ENCODE measurements at regions of chr14 and their contacts with region 1.

Region 1: GRCh38 chr14:64823305-64823861 is 56.3 kb downstream of the SPTB start:
- DNase-seq: peak; percentile 90
- CTCF ChIP-seq: peak; percentile 85

Region 2: DNA sequence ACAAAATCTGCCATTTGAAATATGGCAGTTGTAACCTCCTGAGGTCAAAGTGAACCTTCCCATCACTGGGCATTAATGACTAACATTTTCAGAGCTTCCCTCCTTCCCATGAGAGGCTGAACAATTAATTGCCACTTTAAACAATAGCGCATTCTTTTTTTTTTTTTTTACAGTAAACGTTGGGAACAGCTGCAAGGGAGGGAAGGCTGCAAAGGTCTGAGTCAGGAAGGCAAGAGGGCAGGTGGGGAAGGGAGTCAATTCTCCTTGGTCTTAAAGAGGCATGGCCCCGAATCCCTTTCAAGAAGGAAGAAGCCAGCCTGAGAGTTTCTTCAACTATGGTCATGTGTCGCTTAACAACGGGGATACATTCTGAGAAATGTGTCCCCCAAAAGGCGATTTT is 160.2 kb before region 1 on chr14:
- CTCF ChIA-PET with region 1: no interaction called
- POLR2A ChIA-PET with region 1: no interaction called
- DNase-seq: no peak
- CTCF ChIP-seq: no peak

Region 3: GRCh38 chr14:64788668-64789067 is 34.7 kb before region 1 on chr14:
- CTCF ChIA-PET with region 1: no interaction called
- POLR2A ChIA-PET with region 1: no interaction called
- DNase-seq: no peak
- CTCF ChIP-seq: no peak

Region 4: DNA sequence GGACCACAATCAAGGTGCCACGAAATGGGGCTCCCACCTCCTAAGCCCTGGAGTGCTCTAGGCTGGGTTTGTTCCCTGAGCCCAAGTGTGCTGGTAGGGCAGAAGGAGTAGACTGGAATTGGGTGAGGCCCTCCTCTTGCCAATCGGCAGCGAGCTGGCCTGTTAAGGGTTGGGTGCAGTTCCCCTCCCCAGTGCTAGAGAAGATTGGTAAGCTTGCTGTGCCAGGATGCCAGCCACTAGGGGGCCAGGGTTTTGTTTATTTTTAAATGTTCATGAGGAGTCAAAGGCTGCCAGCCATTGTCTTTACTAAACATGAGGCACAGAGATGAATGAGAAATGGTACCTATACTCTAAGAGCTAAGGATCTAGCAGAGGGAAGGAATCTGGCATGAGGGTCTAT is 23.4 kb before region 1 on chr14:
- CTCF ChIA-PET with region 1: interaction called, 10 read pairs
- POLR2A ChIA-PET with region 1: no interaction called
- DNase-seq: no peak
- CTCF ChIP-seq: no peak

Region 5: GRCh38 chr14:64812217-64812811 is 11.1 kb before region 1 on chr14:
- CTCF ChIA-PET with region 1: interaction called, 30 read pairs
- POLR2A ChIA-PET with region 1: no interaction called
- DNase-seq: peak; percentile 49
- CTCF ChIP-seq: no peak

Region 6: GRCh38 chr14:64848239-64848638 is 24.9 kb after region 1 on chr14:
- CTCF ChIA-PET with region 1: interaction called, 13 read pairs
- POLR2A ChIA-PET with region 1: no interaction called
- DNase-seq: peak; percentile 31
- CTCF ChIP-seq: no peak

Region 7: DNA sequence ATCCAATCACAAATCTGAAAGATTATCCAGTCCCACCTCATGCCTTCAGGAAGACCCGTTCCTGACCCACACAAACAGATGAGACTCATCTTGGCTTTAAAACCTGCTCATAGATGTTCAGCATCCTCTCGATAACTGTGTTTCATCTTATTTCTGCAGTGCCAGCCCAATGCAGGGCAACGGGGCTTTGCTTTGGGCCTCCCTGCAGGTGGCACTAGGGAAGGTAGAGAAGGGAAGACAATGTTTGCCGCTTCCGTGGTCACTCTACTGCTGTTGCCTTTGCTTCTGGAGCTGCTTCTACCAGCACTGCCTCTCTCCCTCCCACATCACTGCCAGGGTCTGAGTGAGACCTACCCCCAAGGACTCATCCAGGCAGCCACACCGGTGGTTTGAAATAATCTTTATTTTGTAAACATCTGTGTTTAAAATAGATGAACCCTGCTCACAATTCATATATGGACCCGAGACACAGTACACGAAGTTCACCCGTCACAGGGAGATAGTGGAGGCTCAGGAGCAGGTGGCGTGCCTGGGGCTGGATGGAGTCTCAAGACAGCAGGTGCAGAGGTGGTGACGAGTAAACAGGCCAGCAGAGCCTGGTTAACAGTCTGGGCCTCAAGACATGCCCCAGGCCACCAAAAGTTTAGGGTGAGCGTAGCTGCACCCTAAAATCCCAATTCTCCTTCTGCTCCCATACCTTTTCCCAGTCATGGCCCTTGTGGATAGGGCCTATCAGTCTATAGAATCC is 122.2 kb after region 1 on chr14:
- CTCF ChIA-PET with region 1: no interaction called
- POLR2A ChIA-PET with region 1: no interaction called
- DNase-seq: no peak
- CTCF ChIP-seq: no peak

Region 8: DNA sequence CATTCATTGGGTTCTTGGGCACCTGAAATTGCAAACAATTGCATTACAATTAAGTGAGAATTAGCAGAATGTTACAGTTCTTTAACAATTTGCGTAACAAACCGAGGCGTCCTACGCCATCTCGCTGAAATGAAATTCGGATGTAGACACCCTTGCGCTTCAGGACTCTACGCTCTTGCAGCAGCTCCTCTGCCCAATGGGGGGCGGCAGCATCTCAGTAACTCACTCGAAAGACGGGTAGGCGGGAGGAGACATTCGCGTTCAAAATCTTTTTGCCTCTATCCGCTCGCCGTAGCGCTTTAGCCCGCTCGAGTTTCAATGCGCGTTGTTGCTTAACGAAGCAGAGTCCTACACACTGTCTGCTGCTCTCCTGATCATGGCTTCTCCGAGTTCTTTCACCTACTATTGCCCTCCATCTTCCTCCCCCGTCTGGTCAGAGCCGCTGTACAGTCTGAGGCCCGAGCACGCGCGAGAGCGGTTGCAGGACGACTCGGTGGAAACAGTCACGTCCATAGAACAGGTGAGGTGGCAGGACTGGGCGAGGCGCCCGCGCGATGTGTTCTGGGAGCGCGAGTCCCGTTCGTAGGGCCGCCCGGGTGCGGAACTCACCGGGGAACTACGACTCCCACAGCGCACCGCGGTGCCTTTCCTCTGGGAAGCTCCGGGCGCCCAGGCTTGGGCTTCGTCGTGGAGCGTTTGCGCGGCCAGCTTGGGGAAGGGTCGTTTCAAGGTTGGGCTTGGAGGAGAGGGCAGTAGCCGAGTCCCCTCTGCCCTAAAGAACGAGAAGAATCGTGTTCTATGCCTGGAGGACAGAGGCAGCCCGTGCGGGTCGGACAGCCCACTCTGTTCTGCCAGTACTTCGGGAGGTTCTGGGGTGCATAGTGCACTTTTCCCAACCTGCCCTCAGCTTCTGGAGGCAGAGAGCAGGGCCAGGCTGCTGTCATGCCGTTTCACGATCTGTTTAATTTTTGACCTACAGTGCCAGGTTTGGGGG is 163.5 kb after region 1 on chr14 and contains the start of gene FNTB:
- CTCF ChIA-PET with region 1: interaction called, 10 read pairs
- POLR2A ChIA-PET with region 1: no interaction called
- DNase-seq: peak; percentile 94
- CTCF ChIP-seq: peak; percentile 98